ENCODE measurements at regions of chr1 and their contacts with region 1.

Region 1: GRCh38 chr1:8970870-8971337 is 25.2 kb downstream of the CA6 start:
- DNase-seq: peak; percentile 59 to 74 (median 66)
- H3K4me3 ChIP-seq: peak overlapping the region; percentile 14 to 19
- H3K4me3 Mint-ChIP-seq: peak overlapping the region; percentile 83 to 96 (median 92)
- H3K27ac ChIP-seq: peak overlapping the region; percentile 45
- H3K27ac Mint-ChIP-seq: peak overlapping the region; percentile 73 to 97 (median 93)
- H3K4me1 ChIP-seq: peaks cover 31% of the 10 kb centered on the region
- H3K4me1 Mint-ChIP-seq: peaks cover 27 to 68% (median 39%) of the 10 kb centered on the region in 4 donors
- H3K27me3 ChIP-seq: no peaks in the 10 kb centered on the region
- H3K27me3 Mint-ChIP-seq: no peaks in the 10 kb centered on the region

Region 2: GRCh38 chr1:7961216-7962015 is 1009.5 kb before region 1 on chr1 and contains the start of gene PARK7:
- CTCF ChIA-PET with region 1: no interaction called
- POLR2A ChIA-PET with region 1: no interaction called
- intact Hi-C with region 1: no loop called
- DNase-seq: peak; percentile 99 to 100 (median 100)
- H3K4me3 ChIP-seq: peak within 1 kb of the TSS; percentile 86 to 97
- H3K4me3 Mint-ChIP-seq: peak within 1 kb of the TSS; percentile 97 to 100 (median 98)
- H3K27ac ChIP-seq: peak within 1 kb of the TSS; percentile 94
- H3K27ac Mint-ChIP-seq: peak within 1 kb of the TSS; percentile 97 to 100 (median 99)
- H3K4me1 ChIP-seq: peaks cover 62% of the 10 kb centered on the region
- H3K4me1 Mint-ChIP-seq: peaks cover 33 to 72% (median 57%) of the 10 kb centered on the region in 4 donors
- H3K27me3 ChIP-seq: no peaks in the 10 kb centered on the region
- H3K27me3 Mint-ChIP-seq: no peaks in the 10 kb centered on the region
- total RNA-seq, gene PARK7: 112 to 122 TPM

Region 3: DNA sequence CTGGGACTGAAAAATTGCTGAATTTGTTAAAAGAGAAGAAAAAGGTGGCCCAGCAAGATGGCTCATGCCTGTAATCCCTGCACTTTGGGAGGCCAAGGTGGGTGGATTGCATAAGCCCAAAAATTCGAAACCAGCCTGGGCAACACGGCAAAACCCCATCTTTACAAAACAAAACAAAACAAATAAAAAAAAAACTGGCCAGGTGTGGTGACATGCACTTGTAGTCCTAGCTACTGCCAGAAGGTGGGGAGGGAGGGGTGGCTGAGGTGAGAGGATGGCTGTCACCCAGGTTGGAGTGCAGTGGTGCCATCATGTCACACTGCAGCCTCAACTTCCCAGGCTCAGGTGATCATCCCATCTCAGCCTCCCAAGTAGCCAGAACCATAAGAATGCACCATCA is 176.3 kb before region 1 on chr1:
- CTCF ChIA-PET with region 1: no interaction called
- POLR2A ChIA-PET with region 1: no interaction called
- intact Hi-C with region 1: no loop called
- DNase-seq: no peak
- H3K4me3 ChIP-seq: no peak overlapping the region
- H3K4me3 Mint-ChIP-seq: no peak overlapping the region
- H3K27ac ChIP-seq: no peak overlapping the region
- H3K27ac Mint-ChIP-seq: no peak overlapping the region
- H3K4me1 ChIP-seq: no peaks in the 10 kb centered on the region
- H3K4me1 Mint-ChIP-seq: peaks cover 0 to 1% (median 0%) of the 10 kb centered on the region in 4 donors
- H3K27me3 ChIP-seq: no peaks in the 10 kb centered on the region
- H3K27me3 Mint-ChIP-seq: no peaks in the 10 kb centered on the region

Region 4: DNA sequence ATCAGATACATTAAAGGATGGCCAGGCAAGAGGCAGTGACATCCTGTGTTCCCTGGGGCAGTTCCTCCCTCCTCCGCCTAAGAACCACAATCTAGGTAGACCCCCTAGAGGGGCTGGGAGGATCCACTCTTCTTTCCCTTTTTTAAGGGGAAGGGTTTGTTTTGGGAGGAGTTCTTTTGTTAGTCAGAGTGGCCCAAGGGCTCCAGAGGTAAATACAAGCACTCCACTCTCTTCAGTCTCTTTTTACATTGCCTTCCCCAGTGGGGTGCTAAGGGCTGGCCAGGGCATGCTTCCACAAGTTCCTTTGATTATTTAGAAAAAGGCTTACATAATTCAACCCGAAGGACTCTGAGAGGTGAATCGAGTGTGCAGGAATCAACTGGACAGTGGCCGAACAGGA is 59.5 kb before region 1 on chr1:
- CTCF ChIA-PET with region 1: no interaction called
- POLR2A ChIA-PET with region 1: no interaction called
- intact Hi-C with region 1: loop called (anchors 5 kb)
- DNase-seq: no peak
- H3K4me3 ChIP-seq: no peak overlapping the region
- H3K4me3 Mint-ChIP-seq: no peak overlapping the region
- H3K27ac ChIP-seq: no peak overlapping the region
- H3K27ac Mint-ChIP-seq: peak overlapping the region in 1 of 7 donors; percentile 47
- H3K4me1 ChIP-seq: no peaks in the 10 kb centered on the region
- H3K4me1 Mint-ChIP-seq: no peaks in the 10 kb centered on the region
- H3K27me3 ChIP-seq: no peaks in the 10 kb centered on the region
- H3K27me3 Mint-ChIP-seq: peaks cover 0 to 6% of the 10 kb centered on the region in 2 donors

Region 5: DNA sequence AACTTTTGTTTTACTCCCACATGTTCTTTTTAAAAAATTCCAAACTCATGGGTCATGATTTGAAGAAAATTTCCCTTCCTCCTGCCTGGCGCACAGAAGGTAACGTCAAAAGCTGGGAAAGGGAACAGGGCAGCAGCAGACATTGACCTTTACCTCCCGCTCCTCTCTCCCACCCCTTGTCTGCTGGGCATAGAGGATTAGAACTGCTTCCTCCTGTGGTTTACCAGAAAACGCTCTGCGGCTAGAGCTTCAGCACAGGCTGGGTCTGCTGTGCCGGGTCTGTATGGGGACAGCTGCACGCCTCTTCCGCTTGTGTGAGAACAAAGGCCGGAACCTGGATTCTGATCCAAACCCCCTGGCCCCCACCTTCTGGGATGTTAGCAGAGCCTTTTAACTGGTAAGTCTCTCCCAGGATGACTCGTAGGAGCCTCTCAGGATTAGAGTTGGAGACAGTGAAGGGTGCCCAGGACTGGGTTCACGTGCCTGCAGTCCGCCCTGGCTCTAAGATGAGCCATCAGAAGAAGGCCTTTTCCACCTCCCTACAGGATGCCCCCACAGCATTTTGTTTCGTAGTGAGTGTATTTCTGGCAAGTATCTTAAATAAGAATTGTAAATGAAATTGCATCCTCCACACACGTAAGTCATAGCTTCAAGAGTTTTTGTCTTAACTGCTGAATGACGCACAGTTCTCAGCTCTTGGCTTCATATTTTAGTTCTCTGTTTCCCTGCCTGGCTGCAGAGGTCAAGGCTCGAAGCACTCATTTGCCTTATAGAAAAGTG is 268.9 kb after region 1 on chr1:
- CTCF ChIA-PET with region 1: no interaction called
- POLR2A ChIA-PET with region 1: no interaction called
- intact Hi-C with region 1: no loop called
- DNase-seq: peak; percentile 27 to 64 (median 42)
- H3K4me3 ChIP-seq: no peak overlapping the region
- H3K4me3 Mint-ChIP-seq: peak overlapping the region; percentile 2 to 87 (median 71)
- H3K27ac ChIP-seq: no peak overlapping the region
- H3K27ac Mint-ChIP-seq: peak overlapping the region in 6 of 7 donors; percentile 1 to 89 (median 46)
- H3K4me1 ChIP-seq: peaks cover 53% of the 10 kb centered on the region
- H3K4me1 Mint-ChIP-seq: peaks cover 37 to 65% (median 49%) of the 10 kb centered on the region in 4 donors
- H3K27me3 ChIP-seq: no peaks in the 10 kb centered on the region
- H3K27me3 Mint-ChIP-seq: no peaks in the 10 kb centered on the region